CD8-positive, alpha-beta memory T cell (primary cell): ENCODE measurements at regions of chr17 and their contacts with region 1.

Region 1: DNA sequence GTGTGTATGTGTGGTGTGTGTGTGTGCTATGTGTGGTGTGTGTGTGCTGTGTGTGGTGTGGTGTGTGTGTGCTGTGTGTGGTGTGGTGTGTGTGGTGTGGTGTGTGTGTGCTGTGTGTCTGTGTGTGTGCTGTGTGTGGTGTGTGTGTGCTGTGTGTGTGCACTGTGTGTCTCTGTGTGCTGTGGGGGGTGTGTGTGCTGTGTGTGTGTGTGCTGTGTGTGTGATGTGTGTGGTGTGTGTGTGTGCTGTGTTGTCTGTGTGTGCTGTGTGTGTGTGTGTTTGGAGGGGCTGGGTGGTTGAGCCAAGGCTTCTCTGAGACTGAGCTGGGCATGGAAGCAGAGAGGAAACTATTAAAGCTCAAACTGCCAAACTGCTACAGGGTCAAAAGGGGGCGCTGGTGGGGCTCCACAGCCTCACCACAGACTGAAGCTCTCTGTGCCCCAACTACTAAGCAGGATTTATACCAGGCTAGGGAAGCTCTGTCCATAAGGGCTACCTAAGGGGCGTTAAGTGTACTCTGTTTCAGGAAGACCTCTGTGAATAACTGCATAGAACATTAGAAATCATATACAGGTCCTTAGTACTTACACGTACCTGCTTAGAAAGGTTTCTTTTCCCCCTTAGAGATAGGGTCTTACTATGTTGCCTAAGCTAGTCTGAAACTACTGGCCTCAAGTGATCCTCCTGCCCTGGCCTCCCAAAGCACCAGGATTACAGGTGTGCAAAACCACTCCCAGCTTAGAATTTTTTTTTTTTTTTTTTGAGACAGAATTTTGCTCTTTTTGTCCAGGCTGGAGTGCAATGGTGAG is 27.8 kb upstream of the GHDC start:
- DNase-seq: peak; percentile 15 to 68 (median 55)
- H3K4me3 ChIP-seq: no peak overlapping the region
- H3K4me3 Mint-ChIP-seq: no peak overlapping the region
- H3K27ac ChIP-seq: no peak overlapping the region
- H3K27ac Mint-ChIP-seq: peak overlapping the region in 7 of 8 donors; percentile 28 to 98 (median 77)
- H3K4me1 ChIP-seq: no peaks in the 10 kb centered on the region
- H3K4me1 Mint-ChIP-seq: peaks cover 0 to 8% (median 7%) of the 10 kb centered on the region in 3 donors
- H3K27me3 ChIP-seq: no peaks in the 10 kb centered on the region
- H3K27me3 Mint-ChIP-seq: peaks cover 0 to 2% of the 10 kb centered on the region in 2 donors

Region 2: GRCh38 chr17:42010898-42011516 is 211.1 kb before region 1 on chr17:
- CTCF ChIA-PET with region 1: no interaction called
- POLR2A ChIA-PET with region 1: no interaction called
- DNase-seq: no peak
- H3K4me3 ChIP-seq: no peak overlapping the region
- H3K4me3 Mint-ChIP-seq: peak overlapping the region in 1 of 7 donors; percentile 22
- H3K27ac ChIP-seq: no peak overlapping the region
- H3K27ac Mint-ChIP-seq: peak overlapping the region in 6 of 8 donors; percentile 1 to 61 (median 24)
- H3K4me1 ChIP-seq: peaks cover 44% of the 10 kb centered on the region
- H3K4me1 Mint-ChIP-seq: peaks cover 51 to 70% (median 62%) of the 10 kb centered on the region in 3 donors
- H3K27me3 ChIP-seq: no peaks in the 10 kb centered on the region
- H3K27me3 Mint-ChIP-seq: no peaks in the 10 kb centered on the region

Region 3: GRCh38 chr17:42120770-42121769 is 101.1 kb before region 1 on chr17 and contains the start of gene KAT2A:
- CTCF ChIA-PET with region 1: no interaction called
- POLR2A ChIA-PET with region 1: no interaction called
- DNase-seq: peak; percentile 60 to 80 (median 67)
- H3K4me3 ChIP-seq: peak within 1 kb of the TSS; percentile 26
- H3K4me3 Mint-ChIP-seq: peak within 1 kb of the TSS; percentile 62 to 87 (median 77)
- H3K27ac ChIP-seq: no peak within 1 kb of the TSS
- H3K27ac Mint-ChIP-seq: peak within 1 kb of the TSS in 7 of 8 donors; percentile 50 to 81 (median 61)
- H3K4me1 ChIP-seq: peaks cover 14% of the 10 kb centered on the region
- H3K4me1 Mint-ChIP-seq: peaks cover 21 to 26% (median 25%) of the 10 kb centered on the region in 3 donors
- H3K27me3 ChIP-seq: no peaks in the 10 kb centered on the region
- H3K27me3 Mint-ChIP-seq: no peaks in the 10 kb centered on the region
- total RNA-seq, gene KAT2A: 52.5 to 53.3 TPM

Region 4: GRCh38 chr17:42276359-42276608 is 54.1 kb after region 1 on chr17 and contains the start of gene STAT5B:
- CTCF ChIA-PET with region 1: interaction called, 10 read pairs
- POLR2A ChIA-PET with region 1: interaction called, 9 read pairs
- DNase-seq: peak; percentile 56 to 81 (median 73)
- H3K4me3 ChIP-seq: peak within 1 kb of the TSS; percentile 75
- H3K4me3 Mint-ChIP-seq: peak within 1 kb of the TSS; percentile 93 to 99 (median 98)
- H3K27ac ChIP-seq: peak within 1 kb of the TSS; percentile 85
- H3K27ac Mint-ChIP-seq: peak within 1 kb of the TSS; percentile 94 to 99 (median 97)
- H3K4me1 ChIP-seq: peaks cover 47% of the 10 kb centered on the region
- H3K4me1 Mint-ChIP-seq: peaks cover 45 to 53% (median 49%) of the 10 kb centered on the region in 3 donors
- H3K27me3 ChIP-seq: no peaks in the 10 kb centered on the region
- H3K27me3 Mint-ChIP-seq: no peaks in the 10 kb centered on the region
- total RNA-seq, gene STAT5B: 124 to 132 TPM

Region 5: DNA sequence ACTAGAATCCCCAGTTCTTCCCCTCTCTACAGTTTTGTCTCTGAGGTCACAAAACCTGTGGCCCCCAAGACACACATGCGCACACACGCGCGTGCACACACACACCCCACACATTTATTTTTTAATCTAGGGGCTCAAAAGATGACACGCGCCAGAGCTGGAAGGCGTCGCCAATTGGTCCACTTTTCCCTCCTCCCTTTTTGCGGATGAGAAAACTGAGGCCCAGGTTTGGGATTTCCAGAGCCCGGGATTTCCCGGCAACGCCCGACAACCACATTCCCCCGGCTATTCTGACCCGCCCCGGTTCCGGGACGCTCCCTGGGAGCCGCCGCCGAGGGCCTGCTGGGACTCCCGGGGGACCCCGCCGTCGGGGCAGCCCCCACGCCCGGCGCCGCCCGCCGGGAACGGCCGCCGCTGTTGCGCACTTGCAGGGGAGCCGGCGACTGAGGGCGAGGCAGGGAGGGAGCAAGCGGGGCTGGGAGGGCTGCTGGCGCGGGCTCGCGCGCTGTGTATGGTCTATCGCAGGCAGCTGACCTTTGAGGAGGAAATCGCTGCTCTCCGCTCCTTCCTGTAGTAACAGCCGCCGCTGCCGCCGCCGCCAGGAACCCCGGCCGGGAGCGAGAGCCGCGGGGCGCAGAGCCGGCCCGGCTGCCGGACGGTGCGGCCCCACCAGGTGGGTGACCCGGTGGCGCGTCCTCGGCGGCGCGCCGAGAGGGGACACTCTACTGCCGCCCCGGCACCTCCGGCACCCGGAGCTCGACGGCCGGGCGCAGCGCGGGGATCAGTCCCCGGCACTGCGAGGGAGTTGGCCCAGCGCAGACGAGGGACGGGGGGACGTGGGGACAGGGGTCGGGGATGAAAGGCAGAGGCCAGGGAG is 66.0 kb after region 1 on chr17 and contains the start of gene STAT5A:
- CTCF ChIA-PET with region 1: interaction called, 26 read pairs
- POLR2A ChIA-PET with region 1: interaction called, 7 read pairs
- DNase-seq: peak; percentile 72 to 91 (median 83)
- H3K4me3 ChIP-seq: peak within 1 kb of the TSS; percentile 65
- H3K4me3 Mint-ChIP-seq: peak within 1 kb of the TSS; percentile 93 to 97 (median 96)
- H3K27ac ChIP-seq: peak within 1 kb of the TSS; percentile 88
- H3K27ac Mint-ChIP-seq: peak within 1 kb of the TSS; percentile 95 to 99 (median 99)
- H3K4me1 ChIP-seq: peaks cover 30% of the 10 kb centered on the region
- H3K4me1 Mint-ChIP-seq: peaks cover 42 to 67% (median 52%) of the 10 kb centered on the region in 3 donors
- H3K27me3 ChIP-seq: no peaks in the 10 kb centered on the region
- H3K27me3 Mint-ChIP-seq: no peaks in the 10 kb centered on the region
- total RNA-seq, gene STAT5A: 259 to 263 TPM

Region 6: DNA sequence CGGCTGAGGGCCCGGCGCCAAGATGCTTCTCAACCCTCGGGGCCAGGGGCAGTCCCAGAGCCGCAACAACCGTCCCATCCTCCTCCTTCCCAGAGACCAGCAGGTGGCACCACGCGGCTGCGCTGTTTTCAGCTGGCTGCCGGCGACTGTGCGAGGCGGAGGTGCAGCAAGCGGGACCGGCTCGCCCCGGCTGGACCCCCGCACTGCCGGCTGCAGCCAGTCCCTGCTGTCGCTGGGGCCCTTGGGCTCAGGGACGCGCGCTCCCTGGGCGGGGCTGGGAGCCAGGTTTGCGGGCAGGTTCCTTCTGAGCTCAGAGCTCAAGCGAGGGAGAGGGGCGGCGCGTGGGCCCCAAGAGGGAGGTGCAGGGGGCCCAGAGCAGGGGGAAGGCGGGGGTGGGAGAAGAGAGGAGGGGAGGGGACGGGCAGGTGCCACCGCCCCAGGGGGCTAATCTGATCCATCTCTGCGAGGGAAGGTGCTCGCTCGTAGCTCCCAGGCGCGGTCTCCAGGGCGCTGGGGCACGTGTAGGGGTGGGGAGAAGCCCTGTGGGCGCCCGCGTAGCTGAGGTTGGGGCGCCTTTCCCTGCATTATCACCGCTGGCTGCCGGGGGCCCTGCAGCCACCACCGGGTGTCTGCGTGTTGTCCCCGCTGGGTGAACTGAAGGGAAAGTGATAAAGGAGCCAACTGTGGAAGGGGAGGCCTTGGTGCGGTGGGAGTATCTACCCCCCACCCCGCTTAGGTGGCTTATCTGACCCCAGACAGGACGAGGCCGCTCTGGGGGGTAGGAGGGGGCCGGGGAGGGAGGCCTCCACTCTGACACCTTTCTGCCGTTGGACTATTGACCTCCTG is 90.4 kb after region 1 on chr17:
- CTCF ChIA-PET with region 1: interaction called, 20 read pairs
- POLR2A ChIA-PET with region 1: no interaction called
- DNase-seq: peak; percentile 53 to 80 (median 62)
- H3K4me3 ChIP-seq: no peak overlapping the region
- H3K4me3 Mint-ChIP-seq: peak overlapping the region; percentile 45 to 79 (median 67)
- H3K27ac ChIP-seq: peak overlapping the region; percentile 45
- H3K27ac Mint-ChIP-seq: peak overlapping the region in 7 of 8 donors; percentile 55 to 92 (median 83)
- H3K4me1 ChIP-seq: peaks cover 56% of the 10 kb centered on the region
- H3K4me1 Mint-ChIP-seq: peaks cover 49 to 57% (median 53%) of the 10 kb centered on the region in 3 donors
- H3K27me3 ChIP-seq: no peaks in the 10 kb centered on the region
- H3K27me3 Mint-ChIP-seq: no peaks in the 10 kb centered on the region